ENCODE measurements at regions of chr16 and their contacts with region 1.

Region 1: GRCh38 chr16:65117811-65118448 is 3.9 kb downstream of the CDH11 start:
- DNase-seq: peak; percentile 78
- H3K4me3 Mint-ChIP-seq: no peak overlapping the region
- H3K27ac Mint-ChIP-seq: no peak overlapping the region
- H3K4me1 Mint-ChIP-seq: peaks cover 10% of the 10 kb centered on the region
- H3K27me3 Mint-ChIP-seq: peaks cover 4% of the 10 kb centered on the region
- CTCF ChIP-seq: peak; percentile 77

Region 2: DNA sequence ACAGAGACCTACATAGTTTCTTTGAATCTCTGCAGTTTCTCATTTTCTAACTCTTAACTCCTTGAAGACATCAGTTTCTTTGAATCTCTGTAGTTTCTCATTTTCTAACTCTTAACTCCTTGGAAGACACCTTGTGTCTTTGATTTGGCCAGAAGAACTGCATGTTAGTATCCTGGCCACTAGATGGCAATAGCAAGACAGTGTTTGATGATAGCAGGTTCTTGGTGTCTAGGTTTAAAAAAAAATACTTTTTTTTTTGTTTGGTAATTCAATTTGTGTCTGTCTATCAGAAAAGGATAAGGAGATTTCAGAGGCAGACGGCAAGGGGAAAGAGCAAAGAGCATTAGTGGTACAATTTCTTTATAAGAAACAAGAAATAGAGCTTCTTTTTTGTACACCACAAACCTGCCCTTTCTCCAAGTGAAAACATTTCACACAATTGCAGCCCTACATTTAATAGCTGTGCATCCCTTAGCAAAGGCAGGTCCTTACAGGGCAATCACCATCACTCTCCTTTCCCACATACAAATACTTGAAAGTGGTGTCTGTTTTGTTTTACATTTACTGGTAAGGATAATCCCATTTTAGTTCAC is 1756.8 kb before region 1 on chr16:
- CTCF ChIA-PET with region 1: interaction called, 6 read pairs
- POLR2A ChIA-PET with region 1: no interaction called
- intact Hi-C with region 1: loop called (anchors 1 kb)
- DNase-seq: peak; percentile 67
- H3K4me3 Mint-ChIP-seq: no peak overlapping the region
- H3K27ac Mint-ChIP-seq: no peak overlapping the region
- H3K4me1 Mint-ChIP-seq: peaks cover 6% of the 10 kb centered on the region
- H3K27me3 Mint-ChIP-seq: no peaks in the 10 kb centered on the region
- CTCF ChIP-seq: peak; percentile 71

Region 3: GRCh38 chr16:63720848-63721247 is 1397.1 kb before region 1 on chr16:
- CTCF ChIA-PET with region 1: interaction called, 4 read pairs
- POLR2A ChIA-PET with region 1: no interaction called
- intact Hi-C with region 1: loop called (anchors 10 kb)
- DNase-seq: no peak
- H3K4me3 Mint-ChIP-seq: no peak overlapping the region
- H3K27ac Mint-ChIP-seq: no peak overlapping the region
- H3K4me1 Mint-ChIP-seq: no peaks in the 10 kb centered on the region
- H3K27me3 Mint-ChIP-seq: no peaks in the 10 kb centered on the region
- CTCF ChIP-seq: no peak

Region 4: DNA sequence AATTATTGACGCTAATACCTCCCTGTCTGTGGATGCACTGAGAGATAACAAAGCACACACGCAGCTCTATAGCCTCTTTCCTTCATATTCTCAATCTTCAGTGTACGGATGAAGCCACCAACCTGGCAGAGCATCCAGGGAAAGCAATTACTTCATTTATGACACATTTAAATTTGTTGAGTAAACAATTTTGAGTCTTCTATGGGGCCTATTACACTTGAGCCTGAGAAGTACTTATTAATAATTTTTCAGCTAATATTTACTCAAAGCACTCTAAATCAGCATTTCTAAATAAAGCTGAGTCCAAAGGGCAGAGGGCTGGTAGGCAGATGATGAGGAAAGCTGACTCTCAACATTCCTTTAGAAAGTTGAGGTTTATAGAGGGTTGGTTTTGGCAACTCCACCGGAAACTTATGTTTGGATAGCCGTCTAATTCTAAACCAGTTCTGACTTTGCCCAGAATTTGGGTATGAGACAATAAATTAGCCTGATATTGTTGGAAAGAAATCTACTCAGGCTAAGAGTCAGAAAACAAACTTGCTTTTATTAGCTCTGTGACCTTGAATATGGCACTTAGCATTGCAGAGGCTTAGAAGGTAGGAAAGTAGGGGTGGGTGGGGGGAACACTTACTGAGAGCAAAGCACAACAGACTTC is 639.6 kb before region 1 on chr16:
- CTCF ChIA-PET with region 1: no interaction called
- POLR2A ChIA-PET with region 1: no interaction called
- intact Hi-C with region 1: loop called (anchors 10 kb)
- DNase-seq: peak; percentile 71
- H3K4me3 Mint-ChIP-seq: no peak overlapping the region
- H3K27ac Mint-ChIP-seq: no peak overlapping the region
- H3K4me1 Mint-ChIP-seq: peaks cover 6% of the 10 kb centered on the region
- H3K27me3 Mint-ChIP-seq: no peaks in the 10 kb centered on the region
- CTCF ChIP-seq: no peak

Region 5: GRCh38 chr16:66270333-66270927 is 1152.5 kb after region 1 on chr16:
- CTCF ChIA-PET with region 1: no interaction called
- POLR2A ChIA-PET with region 1: no interaction called
- intact Hi-C with region 1: loop called (anchors 5 kb)
- DNase-seq: peak; percentile 56
- H3K4me3 Mint-ChIP-seq: peak overlapping the region; percentile 7
- H3K27ac Mint-ChIP-seq: no peak overlapping the region
- H3K4me1 Mint-ChIP-seq: peaks cover 14% of the 10 kb centered on the region
- H3K27me3 Mint-ChIP-seq: no peaks in the 10 kb centered on the region
- CTCF ChIP-seq: peak; percentile 94